Activated CD8-positive, alpha-beta T cell treated with anti-CD3 and anti-CD28 coated beads, Interleukin-2, amount 10 ng/mL, durations not matched to agents 7 days and 5 days (primary cell): ENCODE measurements at regions of chr20 and their contacts with region 1.

Region 1: DNA sequence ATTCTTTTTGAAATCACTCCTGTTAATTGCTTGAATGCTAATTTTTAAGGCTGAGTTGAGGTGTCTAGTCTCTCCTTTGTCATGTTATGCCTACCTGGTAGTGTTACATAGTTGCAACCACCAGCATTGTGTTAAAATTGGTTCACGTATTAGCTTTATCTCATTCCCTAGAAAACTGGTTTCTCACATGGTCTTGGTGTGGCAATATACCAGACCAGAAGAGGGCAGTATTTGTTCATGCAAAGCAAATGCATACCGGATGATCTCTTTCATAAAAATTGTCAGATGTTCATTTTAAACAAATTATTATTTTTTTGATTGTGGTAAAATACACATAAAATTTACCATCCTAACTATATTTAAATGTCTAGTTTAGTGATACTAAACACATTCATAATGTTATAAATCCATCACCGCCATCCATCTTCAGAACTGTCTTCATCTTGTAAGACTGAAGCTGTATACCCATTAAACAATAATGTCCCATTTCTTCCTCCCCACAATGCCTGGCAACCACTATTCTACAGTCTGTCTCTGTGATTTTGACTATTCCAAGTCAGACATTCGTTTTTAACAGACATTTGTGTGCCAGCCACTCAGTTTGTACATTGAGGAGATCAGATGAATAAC is 92.8 kb downstream of the ATRN start:
- DNase-seq: peak; percentile 49
- ATAC-seq: no peak
- H3K4me3 Mint-ChIP-seq: no peak overlapping the region
- H3K27ac Mint-ChIP-seq: no peak overlapping the region
- H3K4me1 Mint-ChIP-seq: no peaks in the 10 kb centered on the region
- H3K27me3 Mint-ChIP-seq: no peaks in the 10 kb centered on the region

Region 2: DNA sequence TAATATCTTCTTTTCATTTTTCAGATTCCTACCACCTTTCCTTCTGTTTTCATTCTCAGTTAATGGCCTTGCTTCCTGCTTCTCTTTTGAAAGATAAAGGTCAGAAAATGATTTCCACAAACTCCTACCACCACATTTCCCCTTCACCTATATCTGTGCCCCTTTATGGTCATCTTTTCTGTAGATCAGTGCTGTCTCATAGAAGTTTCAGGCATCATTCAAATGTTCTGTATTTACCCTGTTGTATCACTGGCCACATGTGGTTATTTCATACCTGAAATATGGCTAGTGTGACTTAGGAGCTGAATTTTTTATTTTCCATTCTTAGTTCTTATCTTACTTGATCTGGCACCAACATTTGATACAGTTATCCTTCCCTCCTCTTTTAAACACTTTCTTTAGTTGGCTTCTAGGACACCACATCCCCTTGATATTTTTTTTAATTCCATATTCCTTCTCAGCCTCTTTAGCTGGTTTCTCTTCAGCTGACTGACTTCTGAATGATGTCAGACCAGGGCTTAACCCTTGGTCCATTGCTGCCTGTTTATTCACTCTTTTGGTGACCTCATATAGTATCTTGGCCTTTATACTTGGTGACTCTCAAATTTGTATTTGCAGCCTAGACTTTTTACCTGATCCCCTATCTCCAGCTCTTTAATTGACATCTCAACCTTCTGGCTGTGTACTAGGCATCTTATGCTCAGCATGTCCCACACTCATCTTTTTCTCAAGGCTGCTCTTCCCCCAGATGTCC is 11.8 kb before region 1 on chr20:
- CTCF ChIA-PET with region 1: interaction called, 11 read pairs
- POLR2A ChIA-PET with region 1: no interaction called
- DNase-seq: no peak
- ATAC-seq: no peak
- H3K4me3 Mint-ChIP-seq: no peak overlapping the region
- H3K27ac Mint-ChIP-seq: no peak overlapping the region
- H3K4me1 Mint-ChIP-seq: peaks cover 3% of the 10 kb centered on the region
- H3K27me3 Mint-ChIP-seq: no peaks in the 10 kb centered on the region

Region 3: DNA sequence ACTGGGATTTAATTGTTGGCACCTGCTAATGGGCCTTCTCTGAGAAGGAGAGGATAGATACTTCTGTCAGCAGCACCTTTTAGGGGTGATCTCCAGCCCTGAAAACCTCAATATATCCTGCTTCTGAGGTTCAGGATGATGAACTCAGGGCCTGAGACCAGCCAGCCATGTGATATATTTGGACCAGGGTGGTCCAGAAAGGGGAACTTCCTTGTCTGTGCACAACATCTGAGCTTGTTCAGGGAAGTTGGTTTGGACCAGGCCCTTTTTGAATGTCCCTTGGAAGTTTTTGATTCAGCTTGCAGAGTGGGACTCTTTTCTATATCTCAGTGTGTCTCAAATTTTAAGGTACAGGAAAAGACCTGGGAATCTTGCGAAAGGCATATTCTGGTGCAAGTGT is 13.7 kb after region 1 on chr20:
- CTCF ChIA-PET with region 1: interaction called, 13 read pairs
- POLR2A ChIA-PET with region 1: no interaction called
- DNase-seq: no peak
- ATAC-seq: no peak
- H3K4me3 Mint-ChIP-seq: no peak overlapping the region
- H3K27ac Mint-ChIP-seq: no peak overlapping the region
- H3K4me1 Mint-ChIP-seq: no peaks in the 10 kb centered on the region
- H3K27me3 Mint-ChIP-seq: no peaks in the 10 kb centered on the region

Region 4: GRCh38 chr20:3710703-3711483 is 147.2 kb after region 1 on chr20:
- CTCF ChIA-PET with region 1: interaction called, 66 read pairs
- POLR2A ChIA-PET with region 1: no interaction called
- DNase-seq: peak; percentile 81
- ATAC-seq: peak; percentile 82
- H3K4me3 Mint-ChIP-seq: no peak overlapping the region
- H3K27ac Mint-ChIP-seq: no peak overlapping the region
- H3K4me1 Mint-ChIP-seq: no peaks in the 10 kb centered on the region
- H3K27me3 Mint-ChIP-seq: peaks cover 6% of the 10 kb centered on the region